Common myeloid progenitor, CD34-positive (primary cell): ENCODE measurements at regions of chr5 and their contacts with region 1.

Region 1: DNA sequence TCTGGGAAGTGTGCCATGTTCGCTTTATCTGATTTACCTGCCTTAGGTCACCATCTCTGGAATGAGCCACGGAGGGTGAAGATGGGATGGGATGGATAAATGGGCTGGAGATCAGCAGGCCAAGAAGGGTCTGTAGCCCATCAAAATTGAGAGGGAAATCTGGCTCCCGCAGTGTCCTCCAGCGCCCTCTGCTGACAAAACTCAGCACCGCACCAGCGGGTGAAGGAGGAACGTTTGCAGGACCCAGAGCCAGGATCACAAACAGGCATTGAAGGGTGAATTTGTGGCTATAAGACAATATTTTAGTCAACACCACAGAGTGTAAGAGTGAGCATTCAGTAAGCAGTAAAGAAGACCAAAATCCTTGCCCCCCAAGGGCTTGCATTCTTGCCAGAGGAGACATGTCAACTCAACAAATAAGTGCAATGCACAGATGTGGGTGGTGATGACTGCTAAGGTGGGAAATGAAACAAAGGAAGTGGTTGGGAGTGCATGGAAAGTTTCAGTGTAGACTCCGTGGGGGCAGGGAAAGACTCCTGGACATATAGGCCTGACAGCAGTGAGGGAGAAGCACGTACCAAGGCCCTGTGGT is 124.4 kb downstream of the TENT4A start:
- DNase-seq: peak in 1 of 3 donors; percentile 19
- H3K4me3 ChIP-seq: no peak overlapping the region
- H3K27ac ChIP-seq: no peak overlapping the region
- H3K4me1 ChIP-seq: peaks cover 5 to 37% (median 18%) of the 10 kb centered on the region in 4 experiments
- H3K27me3 ChIP-seq: peaks cover 0 to 4% (median 0%) of the 10 kb centered on the region in 5 experiments

Region 2: GRCh38 chr5:6820851-6821479 is 16.6 kb before region 1 on chr5:
- CTCF ChIA-PET with region 1: interaction called, 12 read pairs
- POLR2A ChIA-PET with region 1: no interaction called
- DNase-seq: peak; percentile 79 to 88 (median 87)
- H3K4me3 ChIP-seq: no peak overlapping the region
- H3K27ac ChIP-seq: no peak overlapping the region
- H3K4me1 ChIP-seq: peaks cover 0 to 1% (median 0%) of the 10 kb centered on the region in 4 experiments
- H3K27me3 ChIP-seq: peaks cover 0 to 6% (median 0%) of the 10 kb centered on the region in 5 experiments

Region 3: DNA sequence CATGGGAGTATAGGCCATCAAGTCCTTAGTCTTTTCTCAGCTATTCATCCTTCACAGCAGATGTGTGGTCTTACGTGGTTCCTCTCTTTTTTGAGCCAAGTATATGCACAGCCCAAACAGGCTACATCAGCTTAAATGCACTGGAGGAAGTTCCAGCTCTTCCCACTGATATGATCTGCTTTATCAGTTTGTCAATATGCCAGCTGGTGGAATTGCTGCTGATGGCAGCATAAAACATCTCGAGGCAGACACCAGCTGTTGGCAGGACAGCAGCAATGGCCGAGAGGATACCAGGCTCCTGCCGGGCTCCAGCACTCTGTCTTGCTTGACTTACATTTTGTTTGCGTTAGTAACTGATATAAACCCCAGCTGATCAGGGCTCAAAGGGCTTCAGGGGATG is 19.0 kb after region 1 on chr5:
- CTCF ChIA-PET with region 1: no interaction called
- POLR2A ChIA-PET with region 1: no interaction called
- DNase-seq: no peak
- H3K4me3 ChIP-seq: no peak overlapping the region
- H3K27ac ChIP-seq: no peak overlapping the region
- H3K4me1 ChIP-seq: peaks cover 0 to 4% (median under 1%) of the 10 kb centered on the region in 4 experiments
- H3K27me3 ChIP-seq: no peaks in the 10 kb centered on the region